ENCODE measurements at regions of chr22 and their contacts with region 1.

Region 1: DNA sequence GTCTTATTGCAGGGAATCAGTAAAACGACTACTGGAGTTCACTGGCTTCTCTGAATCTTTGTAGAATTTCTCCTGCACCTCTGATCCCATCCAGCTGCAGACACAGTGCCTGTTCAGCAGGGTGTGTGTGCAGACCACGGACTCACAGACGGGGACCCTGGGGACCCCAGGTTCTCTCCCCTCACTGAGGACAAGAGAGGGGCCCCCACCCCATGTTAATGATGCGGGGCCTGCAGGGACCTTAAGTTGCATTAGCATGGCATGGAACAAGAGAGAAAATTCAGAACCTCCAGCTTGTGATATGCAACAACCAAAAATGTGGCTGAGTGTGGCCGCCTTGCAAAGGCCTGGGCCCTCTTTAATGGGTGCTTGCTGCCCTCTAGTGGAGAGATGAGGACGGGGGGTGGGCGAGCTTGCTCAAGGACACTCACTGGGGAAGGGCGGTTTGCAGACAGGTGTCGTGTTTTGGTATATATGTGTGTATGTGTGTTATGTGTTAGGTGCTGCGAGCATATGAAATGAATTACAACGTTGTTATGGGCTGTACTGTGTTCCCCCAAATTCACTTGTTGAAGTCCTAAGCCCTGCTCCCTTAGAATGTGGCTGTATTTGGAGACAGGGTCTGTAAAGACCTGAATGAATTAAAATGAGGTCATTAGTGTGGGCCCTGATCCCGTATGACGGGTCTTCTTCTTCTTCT is 84.4 kb upstream of the SEPTIN5 start:
- DNase-seq: peak; percentile 71 to 92
- H3K4me3 ChIP-seq: no peak overlapping the region
- H3K4me1 ChIP-seq: peaks cover 2% of the 10 kb centered on the region; the same call in 1 of the 2 replicates
- H3K27me3 ChIP-seq: no peaks in the 10 kb centered on the region

Region 2: DNA sequence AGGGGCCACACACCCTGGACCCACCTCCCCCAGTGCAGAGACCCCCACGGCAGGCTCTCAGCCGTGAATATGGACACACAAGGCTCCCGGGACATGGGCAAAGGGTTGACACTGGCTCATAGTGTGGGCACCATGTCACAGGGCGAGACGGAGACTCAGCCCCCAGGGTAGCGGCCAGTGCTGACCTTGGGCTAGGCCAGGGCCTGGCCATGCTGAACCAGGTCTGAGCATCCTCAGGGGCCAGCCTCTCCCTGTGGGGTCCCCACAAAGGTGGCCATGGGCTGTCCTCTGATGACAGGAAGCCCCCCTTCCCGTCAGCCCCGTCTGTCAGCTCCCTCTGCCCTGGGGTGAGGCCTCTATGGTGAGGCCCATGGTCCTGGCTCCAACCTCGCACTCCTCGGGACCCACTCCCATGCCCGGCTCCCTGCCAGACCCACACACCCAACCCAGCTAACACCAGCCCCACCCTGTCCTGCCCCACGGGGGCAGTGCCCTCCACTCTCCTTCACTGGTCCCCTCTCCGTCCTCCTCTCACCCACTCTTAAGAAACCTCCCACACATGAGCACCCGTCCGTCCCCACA is 674.8 kb before region 1 on chr22:
- in situ Hi-C with region 1: loop called (anchors 10 kb)
- DNase-seq: no peak
- H3K4me3 ChIP-seq: no peak overlapping the region
- H3K4me1 ChIP-seq: no peaks in the 10 kb centered on the region
- H3K27me3 ChIP-seq: no peaks in the 10 kb centered on the region; the same call in 1 of the 2 replicates

Region 3: GRCh38 chr22:19187716-19188563 is 441.9 kb before region 1 on chr22:
- in situ Hi-C with region 1: loop called (anchors 5 kb)
- DNase-seq: no peak
- H3K4me3 ChIP-seq: no peak overlapping the region
- H3K4me1 ChIP-seq: no peaks in the 10 kb centered on the region
- H3K27me3 ChIP-seq: no peaks in the 10 kb centered on the region

Region 4: DNA sequence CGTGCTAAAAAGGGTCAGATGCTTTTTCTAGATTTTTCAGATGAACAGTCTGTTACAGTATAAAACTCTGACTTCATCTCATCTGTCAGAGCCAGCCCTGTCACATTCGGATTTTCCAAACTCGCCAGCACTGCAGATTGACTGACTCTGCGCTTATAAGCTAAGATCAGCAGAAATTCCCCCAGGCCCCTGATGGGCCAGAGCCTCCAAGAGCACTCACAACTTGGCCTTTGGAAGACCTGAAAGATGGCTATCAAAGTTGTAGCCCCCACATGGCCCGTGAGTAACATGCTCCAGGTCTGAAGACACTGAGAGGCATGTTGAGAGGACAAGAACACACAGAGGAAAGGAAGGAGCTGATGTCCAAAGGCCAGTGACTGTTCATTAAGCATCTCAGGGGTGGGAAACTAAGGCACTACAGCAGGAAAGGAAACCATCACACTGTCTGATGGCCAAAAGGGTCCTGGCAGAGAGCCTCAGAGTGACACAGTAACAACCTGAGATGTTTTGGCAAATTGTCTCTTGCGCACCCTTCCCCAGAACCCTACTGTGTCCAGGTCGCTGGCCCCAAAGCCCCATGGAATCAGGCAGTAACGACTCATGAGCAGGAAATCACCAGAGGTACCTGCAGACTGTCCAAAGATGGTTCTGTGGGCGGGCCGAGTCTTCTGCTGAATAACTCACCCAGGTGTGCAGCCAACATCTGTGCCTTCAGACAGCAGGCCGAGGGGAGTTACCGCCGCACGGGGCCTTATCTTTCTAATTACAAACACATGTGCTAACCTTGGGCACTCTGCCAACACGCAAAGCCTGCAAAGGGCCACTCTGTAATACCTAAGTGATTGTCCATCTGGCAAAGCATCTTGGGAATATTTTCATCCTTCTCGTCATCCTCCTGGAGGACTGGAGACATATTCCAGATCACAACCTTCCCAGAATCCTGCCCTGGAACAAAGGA is 221.9 kb before region 1 on chr22:
- in situ Hi-C with region 1: loop called (anchors 5 kb)
- DNase-seq: peak in 1 of 2 experiments; percentile 15
- H3K4me3 ChIP-seq: no peak overlapping the region
- H3K4me1 ChIP-seq: no peaks in the 10 kb centered on the region
- H3K27me3 ChIP-seq: no peaks in the 10 kb centered on the region